Activated CD4-positive, alpha-beta memory T cell treated with anti-CD3 and anti-CD28 coated beads, Interleukin-2, amount 10 ng/mL, durations not matched to agents 7 days and 5 days (primary cell): ENCODE measurements at regions of chr12 and their contacts with region 1.

Region 1: GRCh38 chr12:57899010-57899662 is 42.2 kb upstream of the ATP23 start:
- DNase-seq: peak; percentile 83
- H3K4me3 Mint-ChIP-seq: peak overlapping the region; percentile 55
- H3K27ac Mint-ChIP-seq: peak overlapping the region; percentile 98
- H3K4me1 Mint-ChIP-seq: peaks cover 56% of the 10 kb centered on the region
- H3K27me3 Mint-ChIP-seq: peaks cover 1% of the 10 kb centered on the region

Region 2: DNA sequence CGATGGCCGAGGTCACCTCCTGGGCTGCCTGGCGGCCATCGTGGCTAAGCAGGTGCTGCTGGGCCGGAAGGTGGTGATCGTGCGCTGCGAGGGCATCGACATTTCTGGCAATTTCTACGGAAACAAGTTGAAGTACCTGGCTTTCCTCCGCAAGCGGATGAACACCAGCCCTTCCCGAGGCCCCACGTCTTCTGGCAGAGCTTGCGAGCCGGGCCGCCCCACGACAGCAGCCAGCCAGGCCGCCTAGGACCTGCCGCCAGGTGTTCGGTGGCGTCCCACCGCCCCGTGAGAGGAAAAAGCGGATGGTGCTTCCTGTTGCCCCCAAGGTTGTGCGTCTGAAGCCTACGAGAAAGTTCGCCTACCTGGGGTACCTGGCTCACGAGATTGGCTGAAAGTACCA is 224.4 kb before region 1 on chr12:
- CTCF ChIA-PET with region 1: no interaction called
- POLR2A ChIA-PET with region 1: no interaction called
- DNase-seq: no peak
- H3K4me3 Mint-ChIP-seq: no peak overlapping the region
- H3K27ac Mint-ChIP-seq: no peak overlapping the region
- H3K4me1 Mint-ChIP-seq: no peaks in the 10 kb centered on the region
- H3K27me3 Mint-ChIP-seq: peaks cover 9% of the 10 kb centered on the region

Region 3: DNA sequence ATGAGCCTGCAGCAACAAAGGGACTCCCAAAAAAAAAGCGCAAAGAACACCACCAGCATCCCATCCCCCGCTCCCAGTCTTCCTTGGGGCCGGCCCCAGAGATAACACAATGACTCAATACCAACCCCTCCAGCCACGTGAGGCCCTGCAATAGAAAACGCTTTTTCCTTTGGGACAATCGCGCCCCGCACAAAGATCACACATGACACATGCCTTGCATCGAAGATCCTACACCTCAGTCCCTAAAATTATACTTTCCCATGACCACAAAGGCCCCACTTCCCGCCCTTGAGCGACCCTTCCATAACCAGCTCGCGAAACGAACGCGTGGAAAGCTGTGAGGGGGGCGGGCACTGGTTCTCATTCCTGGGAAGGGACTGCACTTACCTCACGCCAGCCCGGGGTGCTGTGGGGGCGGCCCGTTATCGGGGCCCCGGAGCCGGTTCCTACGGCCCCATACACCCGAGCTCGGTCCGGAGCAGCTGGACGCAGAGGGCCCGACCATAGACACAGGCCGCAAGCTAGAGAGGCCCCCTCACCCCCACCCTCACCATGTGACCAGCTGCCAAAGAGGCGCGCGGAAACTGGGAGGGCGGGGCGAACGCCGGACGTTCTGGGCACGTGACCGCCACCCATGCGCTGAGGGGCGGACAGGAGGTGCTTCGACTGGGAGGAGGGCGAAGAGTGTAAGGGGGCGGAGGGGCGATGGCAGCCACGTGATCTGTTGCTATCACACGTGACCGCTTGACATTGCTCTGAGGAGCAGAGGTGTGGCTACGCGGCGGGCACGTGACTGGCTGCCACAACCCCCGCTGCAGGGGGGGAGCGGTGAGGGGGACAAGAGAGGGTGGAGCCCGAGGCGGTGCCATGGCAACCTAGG is 147.1 kb before region 1 on chr12 and contains the start of gene CDK4:
- CTCF ChIA-PET with region 1: interaction called, 14 read pairs
- POLR2A ChIA-PET with region 1: interaction called, 4 read pairs
- DNase-seq: peak; percentile 99
- H3K4me3 Mint-ChIP-seq: peak within 1 kb of the TSS; percentile 95
- H3K27ac Mint-ChIP-seq: peak within 1 kb of the TSS; percentile 74
- H3K4me1 Mint-ChIP-seq: peaks cover 58% of the 10 kb centered on the region
- H3K27me3 Mint-ChIP-seq: peaks cover 3% of the 10 kb centered on the region
- total RNA-seq, gene CDK4: 87.7 to 88.6 TPM

Region 4: GRCh38 chr12:57803319-57803893 is 95.7 kb before region 1 on chr12:
- CTCF ChIA-PET with region 1: interaction called, 55 read pairs
- POLR2A ChIA-PET with region 1: interaction called, 3 read pairs
- DNase-seq: peak; percentile 30
- H3K4me3 Mint-ChIP-seq: no peak overlapping the region
- H3K27ac Mint-ChIP-seq: no peak overlapping the region
- H3K4me1 Mint-ChIP-seq: no peaks in the 10 kb centered on the region
- H3K27me3 Mint-ChIP-seq: no peaks in the 10 kb centered on the region

Region 5: GRCh38 chr12:57836442-57837375 is 62.4 kb before region 1 on chr12:
- CTCF ChIA-PET with region 1: interaction called, 43 read pairs
- POLR2A ChIA-PET with region 1: interaction called, 24 read pairs
- DNase-seq: peak; percentile 43
- H3K4me3 Mint-ChIP-seq: peak overlapping the region; percentile 21
- H3K27ac Mint-ChIP-seq: peak overlapping the region; percentile 79
- H3K4me1 Mint-ChIP-seq: peaks cover 86% of the 10 kb centered on the region
- H3K27me3 Mint-ChIP-seq: no peaks in the 10 kb centered on the region

Region 6: DNA sequence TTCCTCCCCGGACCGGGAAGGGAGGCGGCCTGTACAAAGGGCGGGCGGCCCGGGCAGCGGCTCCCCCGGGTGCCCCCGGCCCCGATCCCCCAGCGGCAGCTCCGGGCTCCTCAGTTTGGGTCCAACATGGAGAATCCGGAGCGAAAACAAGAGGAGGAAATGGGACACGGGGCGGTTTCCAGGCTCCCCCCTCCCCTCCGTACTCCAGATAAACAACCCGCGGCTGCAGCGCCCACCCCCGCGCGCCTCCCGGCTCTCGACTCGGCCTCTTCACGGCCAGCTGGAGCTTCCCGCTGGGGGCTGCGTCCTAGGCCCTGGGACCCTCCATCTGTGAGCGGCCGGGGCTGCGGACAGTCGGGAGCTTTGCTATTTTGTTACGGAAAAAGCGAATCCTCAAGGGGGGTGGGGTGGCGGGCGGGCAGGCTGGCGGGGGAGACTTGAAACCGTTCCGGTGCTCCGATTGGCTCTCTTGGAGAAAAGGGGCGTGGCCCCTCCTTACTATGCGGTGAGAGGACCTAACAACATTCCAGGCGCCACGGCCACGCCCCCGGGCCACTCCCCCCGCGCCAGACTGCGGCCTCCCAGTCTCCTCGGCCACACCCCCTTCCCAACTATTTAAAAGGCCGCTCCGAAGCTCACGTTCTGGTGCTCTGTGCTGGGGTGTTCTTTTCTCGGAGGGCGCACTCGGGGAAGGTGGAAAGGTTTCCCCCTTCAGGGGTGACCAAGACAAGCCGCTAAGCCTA is 52.4 kb before region 1 on chr12 and contains the start of gene CTDSP2:
- CTCF ChIA-PET with region 1: interaction called, 13 read pairs
- POLR2A ChIA-PET with region 1: interaction called, 74 read pairs
- DNase-seq: peak; percentile 89
- H3K4me3 Mint-ChIP-seq: peak within 1 kb of the TSS; percentile 80
- H3K27ac Mint-ChIP-seq: peak within 1 kb of the TSS; percentile 64
- H3K4me1 Mint-ChIP-seq: peaks cover 33% of the 10 kb centered on the region
- H3K27me3 Mint-ChIP-seq: peaks cover 24% of the 10 kb centered on the region
- total RNA-seq, gene CTDSP2: 137 to 141 TPM

Region 7: GRCh38 chr12:57865090-57865751 is 33.9 kb before region 1 on chr12:
- CTCF ChIA-PET with region 1: interaction called, 17 read pairs
- POLR2A ChIA-PET with region 1: interaction called, 11 read pairs
- DNase-seq: peak; percentile 62
- H3K4me3 Mint-ChIP-seq: peak overlapping the region; percentile 68
- H3K27ac Mint-ChIP-seq: no peak overlapping the region
- H3K4me1 Mint-ChIP-seq: peaks cover 8% of the 10 kb centered on the region
- H3K27me3 Mint-ChIP-seq: peaks cover 15% of the 10 kb centered on the region

Region 8: DNA sequence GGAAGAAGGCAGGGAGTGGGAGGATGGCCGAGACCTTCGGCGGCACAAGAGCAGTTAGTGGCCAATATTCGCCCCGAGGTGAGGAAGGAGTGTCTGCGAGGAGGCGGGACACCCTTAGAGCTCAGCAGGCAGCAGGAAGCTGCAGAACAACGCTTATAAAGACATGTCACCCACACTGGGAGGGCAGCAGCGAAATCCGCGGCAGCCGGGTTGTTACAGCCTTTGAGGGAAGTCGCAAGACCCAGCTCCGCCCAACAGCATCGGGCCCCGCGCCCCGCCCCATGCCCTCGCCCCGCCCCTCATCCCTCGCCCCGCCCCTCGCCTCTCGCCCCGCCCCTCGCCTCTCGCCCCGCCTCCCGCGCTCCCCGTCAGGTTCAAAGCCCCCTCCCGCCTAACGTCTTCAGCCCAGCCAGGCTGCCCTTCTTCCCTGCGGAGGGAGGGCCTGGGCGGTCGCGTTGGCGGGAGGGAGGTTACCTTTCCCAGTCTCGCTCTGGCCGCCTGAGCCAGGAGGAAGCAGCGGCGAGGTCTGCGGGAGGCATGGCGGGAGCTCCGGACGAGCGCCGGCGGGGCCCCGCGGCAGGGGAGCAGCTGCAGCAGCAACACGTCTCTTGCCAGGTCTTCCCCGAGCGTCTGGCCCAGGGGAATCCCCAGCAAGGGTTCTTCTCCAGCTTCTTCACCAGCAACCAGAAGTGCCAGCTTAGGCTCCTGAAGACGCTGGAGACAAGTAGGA is 42.2 kb after region 1 on chr12 and contains the start of gene ATP23:
- CTCF ChIA-PET with region 1: interaction called, 3 read pairs
- POLR2A ChIA-PET with region 1: interaction called, 15 read pairs
- DNase-seq: peak; percentile 93
- H3K4me3 Mint-ChIP-seq: peak within 1 kb of the TSS; percentile 84
- H3K27ac Mint-ChIP-seq: peak within 1 kb of the TSS; percentile 98
- H3K4me1 Mint-ChIP-seq: peaks cover 55% of the 10 kb centered on the region
- H3K27me3 Mint-ChIP-seq: no peaks in the 10 kb centered on the region
- total RNA-seq, gene ATP23: 17.1 to 18.7 TPM